ENCODE measurements at regions of chr9 and their contacts with region 1.

Region 1: GRCh38 chr9:2014696-2015580 is at the start of gene SMARCA2:
- DNase-seq: peak; percentile 97
- ATAC-seq: peak; percentile 81
- H3K4me3 Mint-ChIP-seq: peak within 1 kb of the TSS; percentile 98
- H3K27ac Mint-ChIP-seq: peak within 1 kb of the TSS; percentile 99
- H3K4me1 Mint-ChIP-seq: peaks cover 34% of the 10 kb centered on the region
- H3K27me3 Mint-ChIP-seq: no peaks in the 10 kb centered on the region
- total RNA-seq, gene SMARCA2: 285 to 293 TPM

Region 2: GRCh38 chr9:2000314-2000713 is 14.6 kb before region 1 on chr9:
- POLR2A ChIA-PET with region 1: no interaction called
- DNase-seq: no peak
- ATAC-seq: no peak
- H3K4me3 Mint-ChIP-seq: no peak overlapping the region
- H3K27ac Mint-ChIP-seq: no peak overlapping the region
- H3K4me1 Mint-ChIP-seq: peaks cover 5% of the 10 kb centered on the region
- H3K27me3 Mint-ChIP-seq: peaks cover 9% of the 10 kb centered on the region

Region 3: DNA sequence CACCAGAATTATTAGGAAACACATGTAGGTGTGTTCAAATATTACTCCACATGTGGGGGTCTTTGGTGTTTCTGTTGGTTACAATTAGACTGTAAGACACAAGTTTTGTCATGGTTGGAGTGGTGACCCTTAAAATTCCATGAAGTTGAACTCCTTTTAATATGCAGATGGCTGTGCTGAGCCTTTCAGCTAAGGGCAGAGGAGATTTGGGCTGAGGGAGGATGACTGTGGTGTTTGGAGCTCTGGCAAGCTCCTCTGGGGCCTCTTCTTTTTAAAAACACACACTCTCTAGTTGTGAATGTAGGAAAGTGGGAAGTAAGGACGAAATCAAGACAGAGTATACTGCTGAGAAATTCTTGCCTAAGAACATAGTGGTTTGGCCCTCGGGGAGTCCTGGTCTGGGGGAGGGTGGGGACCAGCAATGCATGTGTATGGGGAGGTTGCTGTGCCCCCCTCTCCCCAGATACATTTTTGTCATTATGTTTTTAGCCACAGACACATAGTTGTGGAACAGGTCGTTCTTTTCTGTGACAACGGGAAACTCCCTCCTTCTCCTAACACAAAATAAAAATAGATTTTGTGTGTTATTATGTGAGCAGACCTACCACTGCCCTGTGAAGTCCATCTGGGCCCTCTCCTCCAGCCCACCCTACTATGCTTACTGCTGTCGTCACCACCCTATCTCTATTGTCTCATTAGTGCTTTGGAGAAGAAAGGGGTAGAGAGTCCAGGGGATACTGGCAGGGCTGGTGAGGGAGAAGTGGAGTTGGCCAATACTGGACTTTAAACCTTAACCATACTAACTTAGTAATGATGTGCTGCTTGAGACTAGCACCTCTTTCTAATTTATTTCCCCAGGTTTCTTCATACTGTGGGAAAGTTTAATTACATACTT is 10.2 kb after region 1 on chr9:
- POLR2A ChIA-PET with region 1: interaction called, 29 read pairs
- DNase-seq: no peak
- ATAC-seq: no peak
- H3K4me3 Mint-ChIP-seq: peak overlapping the region; percentile 23
- H3K27ac Mint-ChIP-seq: peak overlapping the region; percentile 55
- H3K4me1 Mint-ChIP-seq: peaks cover 81% of the 10 kb centered on the region
- H3K27me3 Mint-ChIP-seq: no peaks in the 10 kb centered on the region

Region 4: GRCh38 chr9:2053883-2054845 is 39.2 kb after region 1 on chr9:
- POLR2A ChIA-PET with region 1: interaction called, 29 read pairs
- DNase-seq: peak; percentile 54
- ATAC-seq: peak; percentile 99
- H3K4me3 Mint-ChIP-seq: peak overlapping the region; percentile 70
- H3K27ac Mint-ChIP-seq: peak overlapping the region; percentile 89
- H3K4me1 Mint-ChIP-seq: peaks cover 32% of the 10 kb centered on the region
- H3K27me3 Mint-ChIP-seq: no peaks in the 10 kb centered on the region

Region 5: DNA sequence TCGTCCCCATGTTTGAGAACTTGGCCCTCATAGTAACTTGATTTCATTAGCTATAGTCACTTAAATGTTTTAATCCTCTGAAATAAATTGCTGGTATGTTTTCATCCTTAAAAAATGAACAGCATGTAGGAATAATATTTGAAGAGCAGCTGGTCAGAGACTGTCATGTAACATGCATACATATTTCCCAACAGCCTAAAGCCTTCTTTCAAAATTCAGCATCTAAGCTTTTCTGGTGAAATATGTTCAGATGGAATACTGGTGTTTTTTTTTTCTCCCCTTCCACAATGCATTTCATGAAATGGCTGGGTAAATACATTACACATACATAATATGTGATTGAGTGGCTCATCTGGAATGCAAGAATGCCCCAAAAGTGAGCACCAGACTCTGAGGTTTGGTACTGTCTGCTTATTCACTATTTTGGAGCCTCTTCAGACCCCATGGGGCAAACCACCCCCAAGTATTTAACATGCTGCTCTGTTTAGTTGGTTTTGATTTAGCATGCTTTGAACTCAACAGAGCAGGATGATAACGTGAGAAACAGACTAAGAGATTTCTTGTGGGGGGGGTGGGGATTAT is 94.2 kb after region 1 on chr9:
- POLR2A ChIA-PET with region 1: no interaction called
- DNase-seq: no peak
- ATAC-seq: no peak
- H3K4me3 Mint-ChIP-seq: no peak overlapping the region
- H3K27ac Mint-ChIP-seq: no peak overlapping the region
- H3K4me1 Mint-ChIP-seq: no peaks in the 10 kb centered on the region
- H3K27me3 Mint-ChIP-seq: no peaks in the 10 kb centered on the region

Measured in activated naive CD8-positive, alpha-beta T cell treated with anti-CD3 and anti-CD28 coated beads, Interleukin-2, amount 10 ng/mL, durations not matched to agents 7 days and 5 days (primary cell).